ENCODE measurements at regions of chr1 and their contacts with region 1.

Region 1: DNA sequence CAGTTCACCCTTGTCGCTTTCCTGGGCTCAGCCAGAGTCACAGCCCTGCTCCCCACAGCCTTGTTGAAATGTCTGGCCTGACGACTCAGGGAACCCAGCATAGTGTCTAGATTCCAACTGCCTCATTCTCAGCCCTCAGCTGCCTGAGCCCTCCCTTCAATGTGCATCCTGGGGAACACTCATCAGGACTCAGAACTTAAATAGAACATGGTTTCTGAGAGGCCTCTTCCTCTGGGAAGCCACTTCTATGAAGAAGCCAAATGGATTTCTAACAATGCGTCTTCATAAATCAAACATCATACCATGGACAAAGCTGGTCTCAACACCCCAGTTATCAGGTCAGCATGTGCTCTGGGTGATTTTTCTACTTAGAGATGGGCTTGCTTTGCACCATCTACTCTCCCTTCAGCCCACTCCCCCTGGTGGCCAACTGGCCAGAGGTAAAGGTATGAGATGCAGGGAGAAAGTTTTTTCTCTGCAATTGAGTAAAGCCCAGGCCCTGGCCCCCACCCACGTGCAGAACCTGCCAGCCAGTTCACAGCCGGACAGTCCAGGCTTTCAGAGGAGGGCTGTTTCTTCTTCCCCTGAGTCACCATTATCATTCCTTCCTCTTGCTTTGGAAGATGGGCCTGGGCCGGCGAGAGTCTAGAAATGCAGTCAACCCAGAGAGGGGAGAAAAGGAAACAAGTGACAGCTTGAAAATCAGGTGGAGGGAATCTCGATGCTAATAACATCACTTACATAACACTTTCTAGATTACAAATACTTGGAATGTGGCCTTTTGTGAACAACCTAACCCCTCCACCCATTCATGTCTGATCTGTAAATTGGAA is 32.1 kb downstream of the CD244 start:
- H3K4me3 ChIP-seq: no peak overlapping the region
- H3K27ac ChIP-seq: no peak overlapping the region
- H3K4me1 ChIP-seq: no peaks in the 10 kb centered on the region
- CTCF ChIP-seq: peak; percentile 48

Region 2: DNA sequence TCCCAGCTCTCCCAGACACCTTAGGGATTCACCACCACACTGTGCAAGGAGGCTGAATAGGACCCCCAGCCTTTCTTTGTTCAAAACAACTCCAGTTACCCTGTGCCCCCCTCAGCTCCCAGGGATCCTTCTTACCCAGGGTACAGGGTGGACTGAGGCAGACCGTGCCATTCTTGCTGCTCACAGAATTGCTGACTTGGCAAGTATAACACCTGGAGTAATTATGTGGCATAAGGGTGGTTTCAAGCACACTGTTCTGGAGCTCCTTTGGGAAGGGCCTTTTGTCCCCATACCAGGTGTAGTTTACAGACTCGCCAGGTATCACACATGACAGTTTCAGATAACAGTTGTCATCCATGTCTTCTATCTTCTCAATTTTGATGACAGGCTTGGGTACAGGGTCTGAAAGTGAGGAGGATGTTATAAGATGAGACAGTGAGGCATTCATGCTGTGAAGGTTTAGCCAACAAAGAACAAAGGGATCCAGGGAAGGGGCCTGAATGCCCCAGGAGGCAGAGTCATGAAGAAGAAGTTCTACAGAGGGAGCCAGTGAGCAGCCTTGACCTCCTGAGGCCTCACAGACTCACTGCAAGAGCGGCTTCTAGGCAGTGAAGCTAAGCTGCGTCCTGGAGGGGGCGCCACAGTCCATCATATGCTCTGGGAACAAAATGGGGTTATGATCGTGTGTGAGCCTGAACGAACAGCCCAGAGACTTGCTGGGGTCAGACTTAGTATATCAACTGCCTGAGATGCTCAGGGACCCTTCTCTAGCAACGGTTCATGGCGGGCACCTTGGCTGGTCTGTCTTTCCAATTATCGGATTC is 149.3 kb before region 1 on chr1:
- CTCF ChIA-PET with region 1: interaction called, 15 read pairs
- POLR2A ChIA-PET with region 1: no interaction called
- H3K4me3 ChIP-seq: no peak overlapping the region
- H3K27ac ChIP-seq: no peak overlapping the region
- H3K4me1 ChIP-seq: no peaks in the 10 kb centered on the region
- CTCF ChIP-seq: no peak

Region 3: GRCh38 chr1:160726498-160727315 is 103.8 kb before region 1 on chr1:
- CTCF ChIA-PET with region 1: interaction called, 28 read pairs
- POLR2A ChIA-PET with region 1: no interaction called
- H3K4me3 ChIP-seq: no peak overlapping the region
- H3K27ac ChIP-seq: no peak overlapping the region
- H3K4me1 ChIP-seq: no peaks in the 10 kb centered on the region
- CTCF ChIP-seq: peak; percentile 68

Region 4: DNA sequence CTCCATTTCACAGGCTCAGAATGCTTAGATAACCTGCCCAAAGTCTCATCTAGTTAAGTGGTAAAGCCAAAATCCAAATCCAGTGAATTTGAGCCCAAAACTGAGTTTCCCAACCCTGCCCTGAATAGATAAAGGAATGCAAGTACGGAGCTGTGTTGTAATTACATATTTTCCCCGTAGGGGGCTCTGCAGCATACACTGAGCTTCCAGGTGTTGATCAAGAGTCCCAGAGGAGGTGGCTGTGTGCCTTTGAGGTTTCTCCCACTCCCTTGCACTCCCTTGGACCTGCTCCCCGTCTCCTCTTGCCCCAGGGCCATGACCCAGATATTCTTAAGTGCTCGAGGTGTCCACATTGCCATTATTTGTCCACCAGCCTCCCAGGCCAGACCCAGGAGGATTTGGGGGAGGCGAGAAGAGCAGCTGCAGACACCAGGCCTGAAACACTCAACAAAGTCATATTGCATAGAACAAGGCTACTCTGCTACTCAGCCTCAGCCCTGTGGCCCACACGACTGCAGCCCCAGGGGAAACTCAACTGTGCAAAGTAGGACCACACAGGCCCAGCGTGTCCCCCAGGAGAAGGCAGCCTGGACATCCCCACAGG is 52.9 kb before region 1 on chr1:
- CTCF ChIA-PET with region 1: interaction called, 20 read pairs
- POLR2A ChIA-PET with region 1: no interaction called
- H3K4me3 ChIP-seq: no peak overlapping the region
- H3K27ac ChIP-seq: no peak overlapping the region
- H3K4me1 ChIP-seq: no peaks in the 10 kb centered on the region
- CTCF ChIP-seq: no peak

Region 5: GRCh38 chr1:160844447-160845232 is 14.1 kb after region 1 on chr1:
- CTCF ChIA-PET with region 1: interaction called, 15 read pairs
- POLR2A ChIA-PET with region 1: no interaction called
- H3K4me3 ChIP-seq: no peak overlapping the region
- H3K27ac ChIP-seq: no peak overlapping the region
- H3K4me1 ChIP-seq: no peaks in the 10 kb centered on the region
- CTCF ChIP-seq: no peak

Region 6: GRCh38 chr1:161117759-161118581 is 287.4 kb after region 1 on chr1 and contains the starts of genes NIT1 and PFDN2:
- CTCF ChIA-PET with region 1: no interaction called
- POLR2A ChIA-PET with region 1: no interaction called
- H3K4me3 ChIP-seq: peak within 1 kb of the TSS; percentile 89
- H3K27ac ChIP-seq: peak within 1 kb of the TSS; percentile 60
- H3K4me1 ChIP-seq: peaks cover 9% of the 10 kb centered on the region
- CTCF ChIP-seq: peak; percentile 77